T-cell (primary cell): ENCODE measurements at regions of chr17 and their contacts with region 1.

Region 1: DNA sequence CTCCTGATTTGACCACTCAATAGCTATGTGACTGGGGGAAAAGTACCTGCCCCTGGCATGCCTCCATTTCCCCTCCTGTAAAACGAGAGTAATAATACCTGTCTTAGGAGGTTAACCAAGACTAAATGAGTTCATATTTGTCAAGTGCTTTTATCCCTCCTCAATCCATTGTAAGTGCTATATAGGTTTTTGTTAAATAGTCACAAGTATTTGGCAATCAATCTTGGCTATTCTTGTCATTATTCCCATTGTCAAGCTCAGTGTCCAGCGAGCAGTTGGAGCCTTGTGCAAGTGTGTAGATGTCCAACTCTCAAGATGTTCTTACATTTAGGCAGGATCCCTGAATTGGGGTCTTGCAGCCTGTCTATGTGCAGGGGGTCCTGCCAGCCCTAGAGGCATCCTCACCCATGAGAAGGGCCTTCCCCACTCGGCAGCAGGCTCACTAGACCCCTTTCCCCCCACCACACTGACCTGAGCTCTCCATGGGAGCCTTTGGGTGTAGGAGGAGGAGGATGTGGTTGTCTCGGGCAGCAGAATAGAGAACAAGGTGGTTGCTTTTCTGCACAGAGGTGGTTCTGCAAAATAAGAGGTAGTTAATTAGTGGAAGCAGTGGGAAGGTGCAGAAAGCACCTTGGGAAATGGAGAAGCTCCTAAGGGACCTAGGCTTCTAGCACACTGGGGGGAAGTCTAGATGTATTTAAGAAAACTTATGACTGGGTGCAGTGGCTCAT is 18.0 kb downstream of the PIK3R6 start:
- DNase-seq: peak in 1 of 35 experiments; percentile 14
- ATAC-seq: no peak
- H3K4me3 ChIP-seq: no peak overlapping the region
- H3K4me3 Mint-ChIP-seq: no peak overlapping the region
- H3K27ac ChIP-seq: no peak overlapping the region
- H3K27ac Mint-ChIP-seq: no peak overlapping the region
- H3K4me1 ChIP-seq: no peaks in the 10 kb centered on the region
- H3K4me1 Mint-ChIP-seq: no peaks in the 10 kb centered on the region
- H3K27me3 ChIP-seq: no peaks in the 10 kb centered on the region
- H3K27me3 Mint-ChIP-seq: no peaks in the 10 kb centered on the region

Region 2: GRCh38 chr17:8791910-8792270 is 57.6 kb before region 1 on chr17:
- CTCF ChIA-PET with region 1: no interaction called
- POLR2A ChIA-PET with region 1: no interaction called
- DNase-seq: no peak
- ATAC-seq: no peak
- H3K4me3 ChIP-seq: no peak overlapping the region
- H3K4me3 Mint-ChIP-seq: no peak overlapping the region
- H3K27ac ChIP-seq: no peak overlapping the region
- H3K27ac Mint-ChIP-seq: no peak overlapping the region
- H3K4me1 ChIP-seq: no peaks in the 10 kb centered on the region
- H3K4me1 Mint-ChIP-seq: no peaks in the 10 kb centered on the region
- H3K27me3 ChIP-seq: peaks cover 0 to 3% of the 10 kb centered on the region in 2 experiments
- H3K27me3 Mint-ChIP-seq: peaks cover 0 to 2% of the 10 kb centered on the region in 2 donors

Region 3: DNA sequence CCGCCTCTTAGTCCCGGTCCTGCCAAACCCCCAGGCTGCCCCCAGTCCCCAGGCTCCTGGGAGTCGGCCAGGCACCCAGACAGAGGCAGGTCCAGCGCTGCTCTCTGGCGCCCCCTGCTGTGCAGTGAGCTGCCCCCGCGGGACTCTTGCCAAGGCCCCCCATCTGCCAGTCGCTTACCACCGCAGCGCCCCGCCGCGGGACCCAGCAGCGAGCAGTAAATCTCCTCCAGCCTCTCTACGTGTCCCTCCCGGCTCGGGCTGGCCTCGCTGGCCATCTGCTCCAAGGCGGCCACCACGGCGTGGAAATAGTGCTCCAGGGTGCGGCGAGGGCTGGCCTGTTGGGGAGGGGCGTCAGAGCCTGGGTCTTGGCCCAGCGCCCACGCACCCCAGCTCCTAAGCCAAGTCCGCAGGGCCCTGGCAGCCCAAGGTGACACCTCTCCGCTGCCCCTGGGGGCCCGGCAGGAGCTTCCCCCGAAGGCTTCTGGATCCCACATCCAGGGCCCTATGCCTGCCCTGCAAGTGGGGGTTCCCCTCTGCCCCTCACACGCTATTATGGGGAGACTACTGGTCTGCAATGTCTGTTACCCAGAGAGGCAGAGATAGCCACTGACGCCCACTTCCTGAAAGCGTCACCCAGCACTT is 16.6 kb before region 1 on chr17:
- CTCF ChIA-PET with region 1: no interaction called
- POLR2A ChIA-PET with region 1: interaction called in 1 of 2 experiments, 19 read pairs
- DNase-seq: peak in 12 of 35 experiments; percentile 3 to 36 (median 10)
- ATAC-seq: no peak
- H3K4me3 ChIP-seq: no peak overlapping the region
- H3K4me3 Mint-ChIP-seq: no peak overlapping the region
- H3K27ac ChIP-seq: no peak overlapping the region
- H3K27ac Mint-ChIP-seq: no peak overlapping the region
- H3K4me1 ChIP-seq: no peaks in the 10 kb centered on the region
- H3K4me1 Mint-ChIP-seq: no peaks in the 10 kb centered on the region
- H3K27me3 ChIP-seq: peaks cover 0 to 2% of the 10 kb centered on the region in 2 experiments
- H3K27me3 Mint-ChIP-seq: no peaks in the 10 kb centered on the region

Region 4: GRCh38 chr17:8894673-8895578 is 45.5 kb after region 1 on chr17:
- CTCF ChIA-PET with region 1: no interaction called
- POLR2A ChIA-PET with region 1: no interaction called
- DNase-seq: peak in 28 of 35 experiments; percentile 17 to 76 (median 44)
- ATAC-seq: no peak
- H3K4me3 ChIP-seq: no peak overlapping the region
- H3K4me3 Mint-ChIP-seq: peak overlapping the region in 1 of 3 donors; percentile 62
- H3K27ac ChIP-seq: no peak overlapping the region
- H3K27ac Mint-ChIP-seq: peak overlapping the region; percentile 44 to 46
- H3K4me1 ChIP-seq: peaks cover 48 to 63% of the 10 kb centered on the region in 2 experiments
- H3K4me1 Mint-ChIP-seq: peaks cover 55 to 61% (median 57%) of the 10 kb centered on the region in 3 donors
- H3K27me3 ChIP-seq: no peaks in the 10 kb centered on the region
- H3K27me3 Mint-ChIP-seq: no peaks in the 10 kb centered on the region

Region 5: GRCh38 chr17:9206741-9207332 is 357.4 kb after region 1 on chr17:
- CTCF ChIA-PET with region 1: no interaction called
- POLR2A ChIA-PET with region 1: no interaction called
- DNase-seq: no peak
- ATAC-seq: no peak
- H3K4me3 ChIP-seq: no peak overlapping the region
- H3K4me3 Mint-ChIP-seq: no peak overlapping the region
- H3K27ac ChIP-seq: no peak overlapping the region
- H3K27ac Mint-ChIP-seq: no peak overlapping the region
- H3K4me1 ChIP-seq: no peaks in the 10 kb centered on the region
- H3K4me1 Mint-ChIP-seq: peaks cover 0 to 3% (median 0%) of the 10 kb centered on the region in 3 donors
- H3K27me3 ChIP-seq: peaks cover 0 to 22% of the 10 kb centered on the region in 2 experiments
- H3K27me3 Mint-ChIP-seq: peaks cover 3 to 11% of the 10 kb centered on the region in 2 donors